ENCODE measurements at regions of chr7 and their contacts with region 1.

Region 1: DNA sequence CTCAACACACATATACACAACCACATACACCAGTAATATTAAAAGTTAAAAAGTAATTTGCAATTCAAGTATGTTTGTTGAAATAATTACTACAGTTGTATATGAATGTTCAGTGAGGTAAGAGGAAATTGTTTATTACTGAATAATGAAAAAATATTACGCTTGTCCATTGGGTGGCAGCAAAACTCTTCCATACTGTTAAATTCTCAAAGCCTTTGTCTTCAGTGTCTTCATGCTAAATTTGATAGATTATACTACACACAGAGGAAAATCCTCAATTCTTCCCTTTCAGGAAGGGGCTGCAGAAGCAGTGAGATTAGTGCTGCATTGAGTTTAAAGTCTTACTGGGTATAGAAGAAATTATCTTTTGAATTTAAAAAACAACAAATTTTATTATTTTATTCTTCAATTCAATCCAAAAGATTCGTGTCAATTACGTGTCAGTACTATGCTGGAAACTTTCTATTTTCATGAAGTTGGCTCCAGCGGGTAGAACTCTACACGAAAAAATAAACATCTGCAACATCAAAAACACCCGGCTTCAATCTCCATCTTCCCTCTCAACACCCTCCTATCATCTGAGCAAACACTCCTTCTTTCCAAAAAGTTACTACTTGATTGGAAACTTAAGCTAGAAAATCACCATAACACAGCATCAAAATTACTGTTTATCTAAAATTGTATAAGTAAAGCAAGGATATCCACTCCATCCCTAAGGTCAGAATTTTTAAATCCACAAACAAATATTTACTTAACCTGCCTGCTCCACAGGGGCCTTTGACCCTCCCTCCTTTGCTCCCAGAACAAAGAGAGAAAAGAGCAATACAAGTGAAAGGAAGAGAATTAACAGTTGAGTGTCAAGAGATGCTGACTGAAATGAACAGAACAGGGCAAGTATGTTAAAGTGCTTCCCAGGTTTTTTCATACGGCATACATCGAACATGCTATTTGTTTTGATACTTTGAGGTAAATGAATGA is 37.0 kb upstream of the TES start:
- DNase-seq: peak in 7 of 9 donors; percentile 27 to 69 (median 56)
- ATAC-seq: peak; percentile 74
- H3K4me3 ChIP-seq: no peak overlapping the region
- H3K4me3 Mint-ChIP-seq: no peak overlapping the region
- H3K27ac ChIP-seq: no peak overlapping the region
- H3K27ac Mint-ChIP-seq: no peak overlapping the region
- H3K4me1 ChIP-seq: no peaks in the 10 kb centered on the region
- H3K4me1 Mint-ChIP-seq: peaks cover 0 to 8% (median 0%) of the 10 kb centered on the region in 7 donors
- H3K27me3 ChIP-seq: no peaks in the 10 kb centered on the region
- H3K27me3 Mint-ChIP-seq: peaks cover 5 to 42% (median 8%) of the 10 kb centered on the region in 5 donors

Region 2: GRCh38 chr7:115693779-115694178 is 479.6 kb before region 1 on chr7:
- CTCF ChIA-PET with region 1: no interaction called
- POLR2A ChIA-PET with region 1: no interaction called
- intact Hi-C with region 1: no loop called
- DNase-seq: no peak
- ATAC-seq: no peak
- H3K4me3 ChIP-seq: no peak overlapping the region
- H3K4me3 Mint-ChIP-seq: no peak overlapping the region
- H3K27ac ChIP-seq: no peak overlapping the region
- H3K27ac Mint-ChIP-seq: no peak overlapping the region
- H3K4me1 ChIP-seq: no peaks in the 10 kb centered on the region
- H3K4me1 Mint-ChIP-seq: no peaks in the 10 kb centered on the region
- H3K27me3 ChIP-seq: no peaks in the 10 kb centered on the region
- H3K27me3 Mint-ChIP-seq: no peaks in the 10 kb centered on the region

Region 3: DNA sequence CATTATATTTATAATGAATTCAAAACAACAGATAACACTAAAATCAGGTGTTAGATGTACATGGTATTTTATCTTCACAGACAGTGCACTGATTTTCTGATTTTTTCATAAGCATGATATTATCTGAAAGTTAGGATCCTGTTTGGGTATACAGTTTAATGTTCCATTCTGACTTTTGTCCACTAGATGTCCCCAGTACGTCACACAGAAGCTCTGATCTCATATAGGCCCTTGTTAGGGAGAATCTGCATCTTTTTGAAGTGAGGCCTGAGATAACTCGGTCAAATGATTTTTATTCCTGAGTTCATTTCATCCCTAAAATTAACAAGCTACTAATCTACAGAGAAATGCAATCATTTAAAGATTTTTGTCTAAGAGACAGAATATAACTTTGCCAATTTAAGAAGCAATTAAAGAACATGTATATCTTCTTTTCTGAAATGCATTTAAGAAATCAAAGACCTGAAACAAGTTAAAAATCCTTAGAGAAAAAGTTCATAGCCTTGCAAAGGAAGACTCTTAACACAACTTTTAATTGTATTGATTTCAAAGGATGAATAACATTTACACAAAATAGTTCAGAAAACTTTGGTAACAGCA is 35.0 kb before region 1 on chr7:
- CTCF ChIA-PET with region 1: no interaction called
- POLR2A ChIA-PET with region 1: no interaction called
- intact Hi-C with region 1: loop called (anchors 1 to 2 kb)
- DNase-seq: peak in 5 of 9 donors; percentile 22 to 42 (median 27)
- ATAC-seq: peak; percentile 89
- H3K4me3 ChIP-seq: no peak overlapping the region
- H3K4me3 Mint-ChIP-seq: no peak overlapping the region
- H3K27ac ChIP-seq: no peak overlapping the region
- H3K27ac Mint-ChIP-seq: no peak overlapping the region
- H3K4me1 ChIP-seq: no peaks in the 10 kb centered on the region
- H3K4me1 Mint-ChIP-seq: peaks cover 0 to 18% (median 8%) of the 10 kb centered on the region in 7 donors
- H3K27me3 ChIP-seq: peaks cover 0 to 2% of the 10 kb centered on the region in 2 donors
- H3K27me3 Mint-ChIP-seq: peaks cover 0 to 22% (median 10%) of the 10 kb centered on the region in 5 donors

Region 4: DNA sequence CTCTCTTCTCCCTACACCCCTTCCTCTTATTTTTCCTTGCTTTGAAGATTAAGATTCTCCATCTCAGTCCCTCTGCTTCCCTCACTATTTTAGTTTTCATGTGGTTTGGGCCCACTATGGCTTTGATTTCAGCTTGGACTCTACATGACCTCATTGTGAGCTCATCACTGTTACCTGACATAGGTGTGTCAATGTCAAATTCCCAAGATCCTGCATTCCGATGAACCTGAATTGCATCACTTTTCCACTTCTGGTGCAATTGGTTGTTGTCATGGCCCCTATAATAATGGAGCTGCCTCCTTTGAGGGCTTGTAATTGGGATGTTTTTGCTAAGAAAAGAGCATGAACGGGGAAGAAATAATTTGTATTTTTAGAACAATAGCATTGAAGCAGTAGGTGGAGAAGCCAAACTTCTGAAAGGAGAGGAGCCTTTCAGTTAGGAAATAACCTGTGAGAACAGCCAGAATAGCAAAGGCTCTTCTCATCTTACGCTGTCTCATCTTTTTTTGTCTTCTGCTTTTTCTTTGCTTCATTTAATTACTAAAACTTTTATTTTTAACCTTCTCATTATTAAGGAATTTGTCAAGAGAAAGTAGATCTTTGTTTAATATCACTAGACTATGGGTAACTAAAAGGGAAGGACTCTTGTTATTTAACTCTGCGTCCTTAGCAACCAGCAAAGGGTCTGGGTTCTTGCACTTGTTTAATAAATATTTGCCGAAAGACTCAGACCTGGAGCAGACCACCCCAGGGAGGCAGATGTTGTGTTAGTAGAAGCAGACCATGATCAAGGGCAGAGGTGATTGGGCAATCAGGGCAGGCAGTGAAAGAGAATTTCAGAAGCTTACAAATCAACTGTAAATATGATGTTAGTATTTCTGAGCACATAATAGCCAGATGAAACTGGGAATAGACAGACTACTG is 132.4 kb after region 1 on chr7:
- CTCF ChIA-PET with region 1: no interaction called
- POLR2A ChIA-PET with region 1: no interaction called
- intact Hi-C with region 1: no loop called
- DNase-seq: no peak
- ATAC-seq: no peak
- H3K4me3 ChIP-seq: no peak overlapping the region
- H3K4me3 Mint-ChIP-seq: no peak overlapping the region
- H3K27ac ChIP-seq: no peak overlapping the region
- H3K27ac Mint-ChIP-seq: no peak overlapping the region
- H3K4me1 ChIP-seq: no peaks in the 10 kb centered on the region
- H3K4me1 Mint-ChIP-seq: peaks cover 0 to 1% (median 0%) of the 10 kb centered on the region in 7 donors
- H3K27me3 ChIP-seq: no peaks in the 10 kb centered on the region
- H3K27me3 Mint-ChIP-seq: peaks cover 5 to 16% (median 13%) of the 10 kb centered on the region in 5 donors

Region 5: DNA sequence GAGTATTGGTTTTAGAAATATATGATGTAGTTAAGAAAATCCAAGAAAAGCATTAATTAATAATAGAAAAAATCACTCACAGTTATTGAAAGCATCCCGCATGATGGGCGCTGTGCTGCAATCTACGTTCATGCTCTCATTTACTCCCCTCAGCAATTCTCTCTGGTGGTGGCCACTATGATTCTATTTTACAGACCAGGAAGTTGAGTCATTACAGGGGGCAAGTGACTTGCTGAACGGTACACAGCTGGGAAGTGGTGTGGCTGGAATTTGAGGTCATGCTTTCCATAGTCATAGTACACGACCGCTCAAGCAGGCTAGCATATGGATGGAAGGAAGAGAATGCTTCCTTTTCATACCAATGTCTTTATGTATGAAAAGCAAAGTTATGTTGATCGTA is 154.4 kb after region 1 on chr7:
- CTCF ChIA-PET with region 1: no interaction called
- POLR2A ChIA-PET with region 1: no interaction called
- intact Hi-C with region 1: no loop called
- DNase-seq: no peak
- ATAC-seq: no peak
- H3K4me3 ChIP-seq: no peak overlapping the region
- H3K4me3 Mint-ChIP-seq: no peak overlapping the region
- H3K27ac ChIP-seq: no peak overlapping the region
- H3K27ac Mint-ChIP-seq: no peak overlapping the region
- H3K4me1 ChIP-seq: no peaks in the 10 kb centered on the region
- H3K4me1 Mint-ChIP-seq: peaks cover 0 to 2% (median 0%) of the 10 kb centered on the region in 7 donors
- H3K27me3 ChIP-seq: peaks cover 0 to 4% of the 10 kb centered on the region in 2 donors
- H3K27me3 Mint-ChIP-seq: peaks cover 0 to 14% (median 6%) of the 10 kb centered on the region in 5 donors

Region 6: DNA sequence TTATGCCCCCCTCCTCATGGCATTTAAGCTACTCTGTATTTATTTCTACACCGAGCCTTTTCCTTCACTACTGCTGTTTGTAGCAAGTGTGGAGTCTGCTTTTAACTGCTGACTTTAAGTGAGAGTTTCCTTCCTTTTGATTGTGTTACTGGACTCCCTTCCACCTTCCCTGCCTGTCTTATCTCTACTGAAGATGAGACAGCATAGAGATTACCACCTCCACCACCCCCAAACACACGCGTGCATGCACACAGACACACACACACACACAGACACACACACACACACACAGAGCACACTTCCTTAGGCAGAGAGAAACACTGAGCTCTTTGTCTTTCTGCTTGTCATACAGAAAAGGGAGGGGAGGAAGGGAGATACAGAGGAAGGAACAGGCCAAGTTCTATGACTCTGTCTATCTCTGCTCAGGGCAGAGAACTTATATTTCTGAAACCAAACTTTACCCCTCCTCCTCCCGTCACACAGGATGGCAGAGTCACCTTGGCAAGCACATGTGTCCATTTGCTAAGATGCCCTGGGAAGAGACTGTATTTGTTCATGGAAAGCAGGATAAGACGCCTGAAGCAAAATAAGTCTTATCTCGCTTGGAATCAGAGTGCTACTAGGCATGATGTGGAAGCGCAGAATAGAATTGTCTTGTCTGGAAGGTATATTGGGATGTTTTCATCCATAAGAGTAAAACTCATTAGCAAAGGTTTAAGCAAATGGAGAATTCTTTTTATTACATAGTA is 244.4 kb after region 1 on chr7:
- CTCF ChIA-PET with region 1: no interaction called
- POLR2A ChIA-PET with region 1: no interaction called
- intact Hi-C with region 1: no loop called
- DNase-seq: no peak
- ATAC-seq: no peak
- H3K4me3 ChIP-seq: no peak overlapping the region
- H3K4me3 Mint-ChIP-seq: no peak overlapping the region
- H3K27ac ChIP-seq: no peak overlapping the region
- H3K27ac Mint-ChIP-seq: no peak overlapping the region
- H3K4me1 ChIP-seq: no peaks in the 10 kb centered on the region
- H3K4me1 Mint-ChIP-seq: no peaks in the 10 kb centered on the region
- H3K27me3 ChIP-seq: no peaks in the 10 kb centered on the region
- H3K27me3 Mint-ChIP-seq: peaks cover 0 to 24% (median 12%) of the 10 kb centered on the region in 5 donors

Region 7: GRCh38 chr7:116525913-116526861 is 352.8 kb after region 1 on chr7:
- CTCF ChIA-PET with region 1: interaction called, 7 read pairs
- POLR2A ChIA-PET with region 1: no interaction called
- intact Hi-C with region 1: loop called (anchors 1 kb)
- DNase-seq: peak; percentile 21 to 73 (median 52)
- ATAC-seq: peak; percentile 93
- H3K4me3 ChIP-seq: peak overlapping the region; percentile 48
- H3K4me3 Mint-ChIP-seq: peak overlapping the region; percentile 76 to 89 (median 83)
- H3K27ac ChIP-seq: no peak overlapping the region
- H3K27ac Mint-ChIP-seq: peak overlapping the region in 1 of 9 donors; percentile 32
- H3K4me1 ChIP-seq: peaks cover 9 to 14% of the 10 kb centered on the region in 2 donors
- H3K4me1 Mint-ChIP-seq: peaks cover 8 to 22% (median 21%) of the 10 kb centered on the region in 7 donors
- H3K27me3 ChIP-seq: peaks cover 19 to 22% of the 10 kb centered on the region in 2 donors
- H3K27me3 Mint-ChIP-seq: peaks cover 70 to 85% (median 77%) of the 10 kb centered on the region in 5 donors

Region 8: GRCh38 chr7:116809636-116810266 is 636.4 kb after region 1 on chr7:
- CTCF ChIA-PET with region 1: interaction called, 3 read pairs
- POLR2A ChIA-PET with region 1: no interaction called
- intact Hi-C with region 1: loop called (anchors 1 kb)
- DNase-seq: peak in 6 of 9 donors; percentile 14 to 34 (median 23)
- ATAC-seq: peak; percentile 69
- H3K4me3 ChIP-seq: no peak overlapping the region
- H3K4me3 Mint-ChIP-seq: no peak overlapping the region
- H3K27ac ChIP-seq: no peak overlapping the region
- H3K27ac Mint-ChIP-seq: no peak overlapping the region
- H3K4me1 ChIP-seq: no peaks in the 10 kb centered on the region
- H3K4me1 Mint-ChIP-seq: no peaks in the 10 kb centered on the region
- H3K27me3 ChIP-seq: no peaks in the 10 kb centered on the region
- H3K27me3 Mint-ChIP-seq: peaks cover 0 to 22% (median 4%) of the 10 kb centered on the region in 5 donors

Region 9: DNA sequence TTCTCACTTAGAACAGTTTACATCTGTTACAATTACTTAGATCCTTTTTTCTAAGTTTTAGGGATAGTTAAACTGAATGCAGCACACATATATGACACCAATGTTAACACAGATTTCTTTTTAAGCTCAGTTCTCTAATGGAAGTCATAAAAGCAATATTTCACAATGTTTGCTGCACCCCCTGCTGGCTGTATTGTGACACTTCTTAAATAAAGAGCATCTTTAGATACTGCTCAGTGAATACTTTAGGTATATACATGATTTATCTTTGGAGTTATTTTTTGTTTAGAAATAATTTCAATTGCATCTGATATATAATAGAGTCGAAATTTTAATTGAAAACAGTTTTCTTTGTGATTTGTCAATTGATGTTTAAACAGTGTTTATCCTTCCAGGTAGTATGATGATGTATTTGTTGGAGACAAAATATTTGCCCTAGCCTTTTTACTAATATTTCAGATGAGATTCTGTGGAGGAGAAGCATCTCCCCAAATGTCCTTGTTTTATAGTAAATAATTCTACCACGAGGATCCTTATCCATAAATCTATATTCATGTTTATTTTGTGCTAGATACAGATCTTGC is 954.3 kb after region 1 on chr7:
- CTCF ChIA-PET with region 1: interaction called, 3 read pairs
- POLR2A ChIA-PET with region 1: no interaction called
- intact Hi-C with region 1: loop called in 1 of 2 experiments (anchors 1 kb)
- DNase-seq: peak in 8 of 9 donors; percentile 9 to 53 (median 44)
- ATAC-seq: peak; percentile 76
- H3K4me3 ChIP-seq: no peak overlapping the region
- H3K4me3 Mint-ChIP-seq: no peak overlapping the region
- H3K27ac ChIP-seq: no peak overlapping the region
- H3K27ac Mint-ChIP-seq: no peak overlapping the region
- H3K4me1 ChIP-seq: no peaks in the 10 kb centered on the region
- H3K4me1 Mint-ChIP-seq: no peaks in the 10 kb centered on the region
- H3K27me3 ChIP-seq: no peaks in the 10 kb centered on the region
- H3K27me3 Mint-ChIP-seq: peaks cover 0 to 11% (median 0%) of the 10 kb centered on the region in 5 donors